GM10248 (cell line): ENCODE measurements at regions of chr6 and their contacts with region 1.

Region 1: GRCh38 chr6:75934643-75935472 is 137.6 kb downstream of the IMPG1 start:
- DNase-seq: peak; percentile 77
- CTCF ChIP-seq: peak; percentile 74

Region 2: GRCh38 chr6:75802366-75802765 is 132.5 kb before region 1 on chr6:
- CTCF ChIA-PET with region 1: no interaction called
- POLR2A ChIA-PET with region 1: no interaction called
- DNase-seq: no peak
- CTCF ChIP-seq: no peak

Region 3: DNA sequence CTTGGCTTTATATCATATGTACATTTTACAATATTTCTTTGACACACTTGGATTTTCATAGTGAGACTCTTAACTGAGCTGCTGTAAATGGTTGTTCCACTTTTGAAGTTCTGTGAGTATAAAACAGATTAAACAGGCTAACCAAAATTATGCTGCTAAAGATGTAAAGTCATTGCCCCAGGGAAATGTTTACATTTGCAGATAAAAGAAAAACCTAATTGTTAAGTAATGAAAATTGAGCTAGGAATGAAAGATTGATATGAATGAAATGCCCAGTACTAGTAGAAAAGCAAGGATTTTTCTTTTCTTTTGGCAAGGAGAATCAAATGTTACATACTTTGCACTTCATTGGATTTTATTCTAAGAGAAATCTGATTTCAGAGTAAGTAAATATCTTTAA is 21.8 kb before region 1 on chr6:
- CTCF ChIA-PET with region 1: interaction called, 22 read pairs
- POLR2A ChIA-PET with region 1: no interaction called
- DNase-seq: no peak
- CTCF ChIP-seq: no peak

Region 4: GRCh38 chr6:75922226-75922625 is 12.6 kb before region 1 on chr6:
- CTCF ChIA-PET with region 1: interaction called, 14 read pairs
- POLR2A ChIA-PET with region 1: no interaction called
- DNase-seq: no peak
- CTCF ChIP-seq: no peak

Region 5: DNA sequence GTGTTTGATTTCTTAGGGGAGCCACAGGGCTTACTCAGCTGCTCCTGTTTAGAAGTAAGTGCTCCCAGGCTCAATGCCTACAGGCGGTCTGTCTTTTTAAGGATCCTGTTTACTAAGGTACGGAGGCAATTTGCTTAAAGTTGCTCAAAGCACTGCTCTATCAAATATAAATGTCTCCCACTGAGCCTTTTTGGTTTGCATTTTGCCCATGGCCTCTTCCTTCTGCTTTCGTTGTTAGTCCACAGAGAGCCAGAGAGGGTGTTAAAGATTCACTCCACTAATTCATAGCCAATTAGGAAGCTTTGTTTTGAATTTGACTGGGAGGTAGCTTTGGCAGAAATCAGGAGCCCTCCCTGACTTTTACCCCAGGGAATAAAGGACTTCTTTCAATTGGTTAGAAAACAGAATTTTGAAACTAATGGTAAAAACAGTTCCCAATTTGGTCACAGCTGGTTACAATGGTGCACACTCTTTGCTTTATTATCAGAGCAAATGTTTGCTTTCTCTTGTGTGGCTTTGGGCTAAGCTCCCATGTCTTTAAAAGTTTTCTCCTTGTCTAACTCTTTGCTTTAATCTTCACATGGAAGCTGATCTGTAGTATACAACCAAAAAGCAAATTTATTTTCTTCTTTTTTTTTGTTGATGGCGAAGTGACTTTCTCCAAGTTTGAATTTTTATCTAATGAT is 11.4 kb after region 1 on chr6:
- CTCF ChIA-PET with region 1: interaction called, 25 read pairs
- POLR2A ChIA-PET with region 1: no interaction called
- DNase-seq: no peak
- CTCF ChIP-seq: no peak

Region 6: DNA sequence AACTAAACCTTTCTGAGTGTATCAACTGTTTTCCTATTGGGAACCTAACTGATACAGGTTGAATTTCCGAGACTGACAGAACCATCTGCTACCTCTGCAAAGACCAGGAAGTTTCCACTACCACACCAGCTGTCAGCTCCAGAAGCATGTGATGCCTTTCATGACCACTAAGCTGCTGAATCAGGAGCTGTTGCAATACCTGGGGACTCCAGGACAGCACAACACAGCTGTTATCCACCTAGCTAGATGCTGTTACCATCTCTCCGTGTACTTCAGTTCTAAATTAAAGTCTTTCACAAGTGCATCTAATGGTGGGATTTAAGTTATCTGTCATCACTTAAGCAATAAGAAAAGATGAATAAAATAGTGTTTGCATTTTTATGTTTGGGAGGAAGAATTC is 295.9 kb after region 1 on chr6:
- CTCF ChIA-PET with region 1: no interaction called
- POLR2A ChIA-PET with region 1: no interaction called
- DNase-seq: no peak
- CTCF ChIP-seq: no peak

Region 7: DNA sequence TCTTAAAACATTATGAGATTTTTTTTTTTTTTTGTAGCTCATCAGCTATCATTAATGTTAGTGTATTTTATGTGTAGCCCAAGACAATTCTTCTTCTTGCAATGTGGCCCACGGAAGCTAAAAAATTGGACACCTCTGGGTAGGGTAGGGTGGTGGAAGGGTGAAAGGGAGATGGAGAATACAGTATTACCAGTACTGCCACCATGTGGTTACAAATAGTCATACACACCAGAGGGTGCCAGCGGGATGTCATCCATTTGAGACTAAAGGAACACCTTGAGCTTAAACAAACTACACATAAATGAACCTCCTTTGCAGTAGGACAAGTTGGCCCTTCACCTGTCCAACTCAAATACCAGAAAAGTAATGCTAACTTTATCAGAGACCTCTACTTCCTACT is 926.5 kb after region 1 on chr6:
- CTCF ChIA-PET with region 1: interaction called, 18 read pairs
- POLR2A ChIA-PET with region 1: no interaction called
- DNase-seq: no peak
- CTCF ChIP-seq: peak; percentile 33

Region 8: GRCh38 chr6:77457720-77458349 is 1523.0 kb after region 1 on chr6:
- CTCF ChIA-PET with region 1: interaction called, 35 read pairs
- POLR2A ChIA-PET with region 1: no interaction called
- DNase-seq: peak; percentile 44
- CTCF ChIP-seq: peak; percentile 74